ENCODE measurements at regions of chr2 and their contacts with region 1.

Region 1: GRCh38 chr2:167134381-167135072 is 246.2 kb downstream of the XIRP2 start:
- DNase-seq: no peak
- ATAC-seq: no peak
- H3K4me3 ChIP-seq: no peak overlapping the region
- H3K27ac ChIP-seq: peak overlapping the region; percentile 62
- H3K4me1 ChIP-seq: peaks cover 22% of the 10 kb centered on the region
- H3K27me3 ChIP-seq: no peaks in the 10 kb centered on the region
- CTCF ChIP-seq: no peak

Region 2: DNA sequence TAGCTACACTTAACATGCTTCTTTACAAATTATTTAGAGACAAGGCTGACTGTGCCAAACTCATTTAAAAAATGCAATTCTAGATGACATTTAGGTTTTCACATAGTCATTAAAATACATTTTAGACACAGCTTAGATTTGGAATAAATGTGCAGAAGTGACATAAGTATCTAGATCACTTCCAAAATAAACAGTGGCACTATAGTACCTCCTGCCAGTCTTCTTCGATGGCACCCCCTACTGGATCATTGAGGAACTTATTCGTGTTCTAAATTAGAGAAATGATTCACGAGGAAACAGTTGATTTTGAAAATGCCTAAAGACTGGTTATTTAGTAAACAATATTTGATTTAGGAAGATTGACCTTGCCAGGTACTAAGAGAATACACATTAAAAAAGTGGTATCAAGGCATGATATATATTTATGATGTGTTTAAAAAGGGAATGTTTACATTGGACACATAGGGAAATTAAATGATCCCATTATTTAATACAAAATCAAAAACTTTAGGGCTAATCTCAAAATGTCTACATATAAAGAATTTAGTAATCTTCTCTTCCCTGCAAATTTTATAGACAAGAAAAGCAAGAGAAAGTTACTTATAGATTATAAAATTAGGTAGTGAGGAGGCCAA is 77.6 kb after region 1 on chr2:
- intact Hi-C with region 1: loop called in 1 of 2 experiments (anchors 5 kb)
- DNase-seq: no peak
- ATAC-seq: peak; percentile 58 to 87 (median 66)
- H3K4me3 ChIP-seq: no peak overlapping the region
- H3K27ac ChIP-seq: peak overlapping the region; percentile 96
- H3K4me1 ChIP-seq: peaks cover 23% of the 10 kb centered on the region
- H3K27me3 ChIP-seq: no peaks in the 10 kb centered on the region
- CTCF ChIP-seq: peak; percentile 81

Region 3: DNA sequence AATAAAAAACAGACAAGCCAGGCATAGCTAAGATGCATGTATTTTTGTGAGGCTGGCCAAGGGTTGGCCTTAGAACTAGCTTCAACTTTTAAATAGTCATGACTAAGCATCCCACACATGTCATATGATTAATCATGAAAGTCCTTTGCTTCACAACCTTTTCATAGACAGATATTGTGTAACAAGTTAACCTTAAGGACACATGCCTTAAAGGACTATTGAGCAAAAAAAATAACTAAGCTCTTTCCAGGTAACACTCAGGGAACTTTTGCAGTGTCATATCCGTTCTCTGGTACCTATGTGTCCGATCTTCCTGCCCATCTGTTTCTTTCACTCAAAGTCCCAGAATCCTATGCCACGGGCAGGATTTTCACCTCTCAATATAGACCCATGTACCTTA is 614.5 kb after region 1 on chr2:
- intact Hi-C with region 1: loop called in 1 of 2 experiments (anchors 10 kb)
- DNase-seq: peak in 1 of 2 donors; percentile 52
- ATAC-seq: peak; percentile 82 to 90 (median 88)
- H3K4me3 ChIP-seq: peak overlapping the region; percentile 62
- H3K27ac ChIP-seq: peak overlapping the region; percentile 96
- H3K4me1 ChIP-seq: peaks cover 20% of the 10 kb centered on the region
- H3K27me3 ChIP-seq: no peaks in the 10 kb centered on the region
- CTCF ChIP-seq: no peak